ENCODE measurements at regions of chr12 and their contacts with region 1.

Region 1: GRCh38 chr12:29990971-29991370 is 207.2 kb upstream of the TMTC1 start:
- DNase-seq: no peak
- H3K4me3 ChIP-seq: no peak overlapping the region
- H3K27ac ChIP-seq: no peak overlapping the region
- H3K4me1 ChIP-seq: no peaks in the 10 kb centered on the region
- H3K27me3 ChIP-seq: no peaks in the 10 kb centered on the region
- CTCF ChIP-seq: no peak
- EP300 ChIP-seq: no peak
- POLR2A ChIP-seq: no peak

Region 2: DNA sequence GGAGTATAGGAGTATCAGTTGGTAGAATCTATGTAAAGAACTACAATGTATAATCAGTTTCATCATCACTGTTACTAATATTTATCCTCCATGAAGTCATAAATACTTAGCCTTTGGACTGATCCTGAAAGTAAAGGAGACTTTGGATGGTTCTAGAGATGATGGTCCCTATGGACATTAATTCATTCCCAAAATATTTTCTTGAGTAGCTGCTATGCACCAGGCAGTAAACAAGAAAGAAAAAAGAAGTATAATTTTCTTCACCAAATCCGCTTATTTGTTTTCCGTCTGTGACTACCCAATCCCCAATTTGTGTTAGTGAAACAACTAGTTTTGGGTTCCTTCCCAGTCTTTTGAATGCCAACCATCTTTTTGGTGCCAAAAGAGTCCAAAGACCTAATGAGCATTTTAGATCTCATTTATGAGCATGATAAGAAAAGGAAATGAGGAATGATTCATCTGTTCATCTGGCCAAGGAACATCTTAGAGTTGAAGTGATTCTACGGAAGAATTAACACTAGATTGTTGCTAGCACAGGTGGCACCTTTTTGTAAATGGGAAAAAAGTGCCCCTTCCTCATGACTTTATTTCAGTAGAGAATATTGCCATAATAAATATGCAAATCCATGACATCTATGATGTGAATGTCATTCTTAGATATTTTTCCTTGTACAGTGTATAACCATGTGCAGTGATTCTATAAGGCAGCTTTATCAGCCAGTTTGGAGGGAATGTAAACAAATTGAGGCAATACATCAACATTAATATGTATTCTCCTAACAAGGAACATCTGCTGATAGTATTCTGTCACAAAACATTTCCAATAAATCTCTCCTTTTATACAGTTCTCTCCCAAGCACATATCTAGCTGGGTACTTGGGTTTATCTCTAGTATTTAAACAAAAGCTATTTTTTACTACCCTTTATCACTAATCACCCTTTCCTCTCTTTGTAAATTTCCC is 1885.8 kb before region 1 on chr12:
- in situ Hi-C with region 1: no loop called
- intact Hi-C with region 1: loop called (anchors 5 kb)
- DNase-seq: no peak
- H3K4me3 ChIP-seq: no peak overlapping the region
- H3K27ac ChIP-seq: no peak overlapping the region
- H3K4me1 ChIP-seq: no peaks in the 10 kb centered on the region
- H3K27me3 ChIP-seq: no peaks in the 10 kb centered on the region
- CTCF ChIP-seq: no peak
- EP300 ChIP-seq: no peak
- POLR2A ChIP-seq: no peak

Measured in transverse colon (tissue), 4 donors.